Heart left ventricle (tissue), 16 donors: ENCODE measurements at regions of chr1 and their contacts with region 1.

Region 1: GRCh38 chr1:173255214-173255813 is 48.2 kb upstream of the TNFSF4 start:
- DNase-seq: no peak
- ATAC-seq: no peak
- H3K4me3 ChIP-seq: no peak overlapping the region
- H3K27ac ChIP-seq: no peak overlapping the region
- H3K4me1 ChIP-seq: peaks cover 0 to 4% (median 0%) of the 10 kb centered on the region in 12 donors
- H3K27me3 ChIP-seq: no peaks in the 10 kb centered on the region
- CTCF ChIP-seq: peak; percentile 50 to 81 (median 72)
- POLR2A ChIP-seq: no peak

Region 2: DNA sequence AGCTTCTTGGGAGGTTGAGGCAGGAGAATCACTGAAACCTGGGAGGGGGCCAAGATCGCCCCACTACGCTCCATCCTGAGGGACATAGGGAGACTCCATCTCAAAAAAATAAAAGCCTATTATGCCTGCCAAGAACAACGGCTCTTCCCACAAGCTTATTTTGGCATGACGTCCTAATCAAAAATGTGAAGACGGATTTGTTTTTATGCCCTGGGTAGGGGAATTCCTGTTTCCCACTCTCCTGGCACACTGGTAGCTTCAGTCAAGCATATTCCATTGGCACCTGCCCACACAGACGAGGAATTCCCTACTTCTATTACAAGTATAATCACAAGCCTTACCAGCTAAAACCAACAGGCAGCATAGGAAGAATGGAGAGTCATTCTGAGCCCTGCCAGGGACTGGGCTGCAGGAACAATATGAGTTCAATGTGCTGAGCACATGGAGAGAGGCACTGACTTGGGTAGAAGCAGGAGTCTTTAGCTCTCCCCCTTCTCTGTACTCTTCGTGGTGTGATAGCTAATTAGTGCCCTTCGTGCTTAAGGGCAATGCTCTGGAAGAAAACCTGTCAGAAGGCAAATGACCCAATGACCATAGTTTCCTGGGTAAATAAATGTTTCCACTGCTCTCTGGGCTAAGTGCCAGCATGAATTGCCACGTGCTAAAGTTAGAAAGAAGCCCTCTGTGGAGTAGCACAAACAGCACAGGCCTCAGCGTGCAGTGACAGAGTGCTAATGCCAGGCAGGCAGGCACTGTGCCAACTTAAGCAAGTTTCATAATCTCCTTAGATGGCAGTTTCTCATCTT is 65.0 kb before region 1 on chr1:
- intact Hi-C with region 1: no loop called
- DNase-seq: peak; percentile 72 to 92 (median 84)
- ATAC-seq: peak; percentile 93 to 97 (median 95)
- H3K4me3 ChIP-seq: peak overlapping the region in 1 of 12 donors; percentile 6
- H3K27ac ChIP-seq: peak overlapping the region; percentile 68 to 84 (median 76)
- H3K4me1 ChIP-seq: peaks cover 0 to 24% (median 16%) of the 10 kb centered on the region in 12 donors
- H3K27me3 ChIP-seq: no peaks in the 10 kb centered on the region
- CTCF ChIP-seq: no peak
- POLR2A ChIP-seq: no peak

Region 3: GRCh38 chr1:173409613-173410012 is 154.3 kb after region 1 on chr1:
- intact Hi-C with region 1: loop called in 7 of 10 experiments (anchors 5 to 10 kb)
- DNase-seq: peak; percentile 51 to 71 (median 56)
- ATAC-seq: peak in 3 of 4 donors; percentile 63 to 65 (median 64)
- H3K4me3 ChIP-seq: no peak overlapping the region
- H3K27ac ChIP-seq: no peak overlapping the region
- H3K4me1 ChIP-seq: peaks cover 0 to 54% (median 18%) of the 10 kb centered on the region in 12 donors
- H3K27me3 ChIP-seq: no peaks in the 10 kb centered on the region
- CTCF ChIP-seq: no peak
- POLR2A ChIP-seq: no peak